ENCODE measurements at regions of chr5 and their contacts with region 1.

Region 1: DNA sequence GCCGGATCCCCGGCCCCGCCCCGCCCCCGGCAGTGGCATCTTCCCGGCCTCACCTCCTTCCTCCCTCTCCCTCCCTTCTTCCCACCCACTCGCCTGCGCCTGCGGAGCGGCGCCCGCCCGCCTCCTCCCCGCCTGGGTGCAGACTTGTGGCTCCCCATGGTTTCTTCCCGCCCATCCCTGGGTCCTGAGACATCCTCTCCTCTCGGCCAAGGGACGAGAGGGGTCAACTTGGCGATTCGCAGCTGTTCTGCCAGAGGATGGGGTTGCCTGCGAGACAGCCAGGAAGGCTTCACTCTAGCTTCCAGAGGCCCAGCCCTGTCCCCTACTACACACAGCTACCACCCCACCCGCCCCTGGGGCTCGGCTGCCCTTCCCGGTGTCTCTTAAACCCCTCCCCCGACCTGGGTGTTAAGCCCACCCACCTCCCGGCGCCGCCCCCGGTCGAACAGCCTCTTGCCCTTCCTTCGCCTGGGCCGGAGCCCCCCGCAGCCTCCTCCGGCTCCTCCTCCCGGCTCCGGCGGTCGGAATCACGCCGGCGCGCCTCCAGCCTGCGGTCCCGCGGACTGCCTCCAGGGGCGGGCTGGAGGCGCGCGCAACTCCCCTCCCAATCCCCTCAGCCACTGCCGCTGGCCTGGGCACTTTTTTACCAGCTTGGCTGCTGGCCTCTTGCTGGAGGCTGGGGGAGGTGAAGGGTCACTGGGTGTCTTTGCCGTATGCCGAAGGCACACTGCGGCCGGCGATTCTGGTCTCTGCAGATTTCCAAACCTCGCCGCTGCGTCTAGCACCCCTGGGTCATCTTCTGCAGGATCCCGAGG is 1.9 kb downstream of the JADE2 start:
- DNase-seq: peak; percentile 76 to 86
- H3K4me3 ChIP-seq: peak overlapping the region; percentile 89
- H3K27ac ChIP-seq: peak overlapping the region; percentile 52; the same call in 1 of the 2 replicates
- H3K4me1 ChIP-seq: peaks cover 20% of the 10 kb centered on the region
- H3K27me3 ChIP-seq: no peaks in the 10 kb centered on the region
- CTCF ChIP-seq: peak; percentile 89

Region 2: DNA sequence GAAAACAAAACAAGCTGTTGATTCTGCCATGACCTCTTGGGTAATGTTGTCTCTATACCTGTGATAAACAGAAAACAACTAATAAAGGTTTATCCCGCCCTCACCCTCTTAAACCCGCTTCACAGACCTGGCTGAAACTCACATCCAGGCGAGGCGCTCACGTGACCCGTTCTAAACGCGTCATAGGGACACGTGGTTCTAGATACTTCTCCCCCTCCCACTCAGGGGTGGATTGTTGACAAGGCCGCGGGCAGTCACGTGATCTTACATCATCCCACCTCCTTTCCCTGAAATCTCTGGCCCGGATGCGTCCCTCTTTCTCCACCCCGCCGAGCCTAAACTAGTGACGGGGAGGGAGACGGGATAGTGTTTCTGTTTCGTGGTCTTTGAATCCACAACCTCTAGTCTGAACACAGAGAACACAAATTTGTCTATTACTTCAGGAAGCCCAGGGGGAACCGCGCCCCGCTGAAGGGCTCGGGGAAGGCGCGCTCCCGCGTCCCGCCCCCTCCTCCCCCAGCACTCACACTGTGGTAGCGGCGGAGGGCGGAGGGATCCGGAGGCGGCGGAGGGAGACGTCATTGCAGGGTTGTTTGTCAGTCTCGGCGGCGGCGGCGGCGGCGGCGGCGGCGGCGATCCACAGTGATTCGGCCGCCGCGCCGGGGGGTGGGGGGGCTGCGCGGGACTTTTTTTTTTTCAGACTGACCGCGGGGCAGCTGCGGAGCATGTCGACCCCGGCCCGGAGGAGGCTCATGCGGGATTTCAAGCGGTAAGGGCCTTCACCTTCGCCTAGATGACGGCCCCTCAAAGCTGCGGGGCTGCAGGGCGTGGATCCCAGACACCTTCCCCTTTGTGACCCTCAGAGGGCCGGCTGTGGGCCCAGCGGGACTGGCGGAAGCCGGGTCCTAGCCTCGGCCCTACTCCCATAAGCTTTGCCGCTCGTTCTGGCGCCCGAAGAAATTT is 156.2 kb before region 1 on chr5 and contains the start of gene UBE2B:
- CTCF ChIA-PET with region 1: no interaction called
- POLR2A ChIA-PET with region 1: no interaction called
- intact Hi-C with region 1: loop called (anchors 2 kb)
- DNase-seq: peak; percentile 93
- H3K4me3 ChIP-seq: peak within 1 kb of the TSS; percentile 99
- H3K27ac ChIP-seq: peak within 1 kb of the TSS; percentile 97
- H3K4me1 ChIP-seq: peaks cover 22% of the 10 kb centered on the region
- H3K27me3 ChIP-seq: no peaks in the 10 kb centered on the region
- CTCF ChIP-seq: no peak
- total RNA-seq, gene UBE2B: 61.9 and 85.5 TPM in 2 replicates

Region 3: GRCh38 chr5:134430001-134430569 is 97.3 kb before region 1 on chr5:
- CTCF ChIA-PET with region 1: no interaction called
- POLR2A ChIA-PET with region 1: no interaction called
- intact Hi-C with region 1: no loop called
- DNase-seq: no peak
- H3K4me3 ChIP-seq: no peak overlapping the region
- H3K27ac ChIP-seq: no peak overlapping the region
- H3K4me1 ChIP-seq: peaks cover 7% of the 10 kb centered on the region
- H3K27me3 ChIP-seq: no peaks in the 10 kb centered on the region
- CTCF ChIP-seq: no peak

Region 4: GRCh38 chr5:134465816-134466240 is 61.5 kb before region 1 on chr5:
- CTCF ChIA-PET with region 1: interaction called, 5 read pairs
- POLR2A ChIA-PET with region 1: no interaction called
- intact Hi-C with region 1: loop called (anchors 1 kb)
- DNase-seq: peak; percentile 77 to 90
- H3K4me3 ChIP-seq: peak overlapping the region; percentile 58
- H3K27ac ChIP-seq: peak overlapping the region; percentile 85
- H3K4me1 ChIP-seq: peaks cover 25% of the 10 kb centered on the region
- H3K27me3 ChIP-seq: no peaks in the 10 kb centered on the region
- CTCF ChIP-seq: no peak

Region 5: DNA sequence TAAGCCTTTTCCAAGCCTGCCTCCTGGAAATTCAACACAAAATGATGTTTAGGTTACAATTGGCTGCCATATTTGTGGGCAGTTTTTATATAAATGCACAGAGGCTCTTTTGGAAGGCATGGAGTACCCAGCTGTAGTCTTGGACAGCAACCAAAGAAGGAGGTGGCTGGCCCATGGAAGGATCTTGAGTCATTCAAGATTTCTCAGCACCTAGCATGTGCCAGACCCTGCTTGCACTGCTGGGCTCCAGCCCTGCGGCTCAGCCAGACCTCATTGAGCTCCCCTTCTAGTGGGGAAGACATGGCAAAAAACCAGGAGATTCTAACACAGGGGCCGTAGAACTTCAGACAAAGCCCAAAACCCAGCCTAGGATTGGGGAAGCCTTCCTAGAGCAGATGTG is 20.2 kb after region 1 on chr5:
- CTCF ChIA-PET with region 1: interaction called, 6 read pairs
- POLR2A ChIA-PET with region 1: interaction called, 19 read pairs
- intact Hi-C with region 1: loop called (anchors 2 kb)
- DNase-seq: no peak
- H3K4me3 ChIP-seq: no peak overlapping the region
- H3K27ac ChIP-seq: no peak overlapping the region
- H3K4me1 ChIP-seq: no peaks in the 10 kb centered on the region
- H3K27me3 ChIP-seq: no peaks in the 10 kb centered on the region
- CTCF ChIP-seq: no peak

Region 6: GRCh38 chr5:134738133-134738962 is 211.0 kb after region 1 on chr5 and contains the start of gene CAMLG:
- CTCF ChIA-PET with region 1: no interaction called
- POLR2A ChIA-PET with region 1: no interaction called
- intact Hi-C with region 1: loop called (anchors 5 kb)
- DNase-seq: peak; percentile 91 to 97
- H3K4me3 ChIP-seq: peak within 1 kb of the TSS; percentile 72
- H3K27ac ChIP-seq: peak within 1 kb of the TSS; percentile 83
- H3K4me1 ChIP-seq: peaks cover 14% of the 10 kb centered on the region
- H3K27me3 ChIP-seq: no peaks in the 10 kb centered on the region
- CTCF ChIP-seq: peak; percentile 70
- total RNA-seq, gene CAMLG: 24.4 and 28.0 TPM in 2 replicates

Region 7: DNA sequence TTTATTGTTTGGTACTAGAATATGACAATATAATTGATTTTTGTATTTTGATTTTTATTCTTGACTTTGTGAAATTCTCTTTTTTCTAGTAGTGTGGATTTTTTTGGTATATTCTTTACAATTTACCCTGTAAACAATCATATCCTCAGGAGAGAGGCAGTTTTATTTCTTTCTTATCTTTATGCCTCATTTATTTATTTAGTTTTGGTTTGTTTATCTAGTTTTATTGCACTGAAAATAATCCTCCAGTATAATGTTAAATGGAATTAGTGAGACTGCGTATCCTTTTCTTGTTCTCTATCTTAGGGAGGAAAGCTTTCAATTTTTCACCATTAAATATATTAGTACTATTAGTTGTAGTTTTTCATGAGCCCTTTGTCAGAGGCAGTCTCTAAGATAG is 762.3 kb after region 1 on chr5:
- CTCF ChIA-PET with region 1: no interaction called
- POLR2A ChIA-PET with region 1: no interaction called
- intact Hi-C with region 1: no loop called
- DNase-seq: no peak
- H3K4me3 ChIP-seq: no peak overlapping the region
- H3K27ac ChIP-seq: no peak overlapping the region
- H3K4me1 ChIP-seq: no peaks in the 10 kb centered on the region
- H3K27me3 ChIP-seq: no peaks in the 10 kb centered on the region
- CTCF ChIP-seq: no peak

Measured in PC-9 (cell line).